Sciatic nerve (tissue), 2 donors: ENCODE measurements at regions of chr1 and their contacts with region 1.

Region 1: DNA sequence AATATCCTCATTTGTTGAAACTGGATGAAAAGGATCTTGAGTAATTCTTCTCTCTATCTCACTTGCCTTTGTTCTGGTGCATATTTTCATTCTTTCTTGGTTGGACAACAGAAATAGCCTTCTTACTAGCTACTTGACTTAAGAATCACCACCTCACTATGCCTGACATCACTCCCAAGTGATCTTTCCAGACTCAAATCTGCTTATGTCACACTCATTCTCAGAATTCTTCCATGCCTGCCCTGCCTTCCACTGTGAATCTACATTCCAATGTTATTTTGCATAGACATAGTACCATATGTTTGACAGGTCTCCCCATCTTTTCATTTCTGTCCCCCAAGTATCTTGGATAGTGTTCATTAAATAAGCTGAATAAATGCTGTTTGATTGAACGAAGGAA is 78.5 kb upstream of the DPYD start:
- DNase-seq: no peak
- ATAC-seq: no peak

Region 2: GRCh38 chr1:97063530-97063929 is 935.8 kb before region 1 on chr1:
- intact Hi-C with region 1: loop called (anchors 5 kb)
- DNase-seq: no peak
- ATAC-seq: no peak

Region 3: DNA sequence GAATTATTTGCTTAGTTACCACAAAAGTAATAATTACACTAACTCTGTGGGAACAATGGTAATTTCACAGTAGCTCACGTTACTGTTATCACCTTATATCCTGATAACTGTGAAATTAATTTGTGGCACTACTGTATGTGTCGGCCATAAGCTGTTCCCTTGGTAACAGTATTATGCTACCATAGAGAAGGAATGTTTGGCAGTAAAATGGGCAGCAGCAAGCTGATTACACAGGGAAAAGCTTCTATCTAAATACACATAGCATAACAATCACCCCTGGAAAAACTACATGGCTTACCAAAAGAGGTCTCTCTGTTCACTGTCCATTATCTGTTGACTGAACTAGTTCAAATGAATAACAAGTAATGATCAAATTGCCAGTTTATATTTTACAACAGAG is 202.6 kb before region 1 on chr1:
- intact Hi-C with region 1: no loop called
- DNase-seq: no peak
- ATAC-seq: no peak